ENCODE measurements at regions of chr1 and their contacts with region 1.

Region 1: DNA sequence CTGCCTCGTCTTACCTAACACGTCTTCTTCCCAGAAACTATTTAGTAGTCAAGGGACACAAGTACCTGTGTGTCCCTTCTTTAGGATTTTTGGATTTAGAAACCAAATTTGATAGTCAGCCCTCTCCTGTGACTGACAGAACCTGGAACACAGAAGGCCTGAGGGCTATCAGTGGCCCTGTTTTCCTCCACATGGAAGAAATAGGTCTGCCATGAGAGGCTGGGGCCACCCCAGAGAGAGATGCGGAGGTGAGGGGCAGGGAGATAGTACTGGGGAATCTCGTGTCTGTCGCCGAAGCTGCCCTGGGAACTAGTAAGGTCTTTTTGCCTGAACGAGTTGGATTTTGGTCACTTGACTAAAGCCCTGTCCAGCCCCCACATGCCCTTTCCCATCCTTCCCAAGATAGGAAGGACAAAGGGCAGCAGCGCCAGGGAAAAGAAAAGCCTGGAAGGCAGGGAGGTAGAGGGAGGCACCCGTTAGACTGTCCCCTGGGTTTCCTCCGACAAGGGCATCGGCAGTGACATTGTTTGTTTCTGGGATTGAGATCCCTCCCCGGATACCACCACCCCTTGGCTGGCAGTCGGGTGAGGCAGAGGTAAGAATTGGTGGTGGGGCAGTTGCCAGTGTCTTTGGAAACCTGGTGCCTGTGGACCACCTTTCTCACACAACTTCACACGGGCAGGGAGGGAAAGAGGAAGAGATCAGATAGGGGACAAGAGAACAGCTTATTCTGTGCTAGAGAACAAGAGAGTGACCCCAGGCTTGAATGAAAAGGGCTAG is 19.8 kb downstream of the SMIM12 start:
- DNase-seq: peak in 1 of 3 donors; percentile 38
- ATAC-seq: no peak
- H3K4me3 ChIP-seq: no peak overlapping the region
- H3K27ac ChIP-seq: no peak overlapping the region
- H3K4me1 ChIP-seq: peaks cover 0 to 4% (median 0%) of the 10 kb centered on the region in 4 donors
- H3K27me3 ChIP-seq: no peaks in the 10 kb centered on the region
- CTCF ChIP-seq: no peak
- POLR2A ChIP-seq: no peak

Region 2: DNA sequence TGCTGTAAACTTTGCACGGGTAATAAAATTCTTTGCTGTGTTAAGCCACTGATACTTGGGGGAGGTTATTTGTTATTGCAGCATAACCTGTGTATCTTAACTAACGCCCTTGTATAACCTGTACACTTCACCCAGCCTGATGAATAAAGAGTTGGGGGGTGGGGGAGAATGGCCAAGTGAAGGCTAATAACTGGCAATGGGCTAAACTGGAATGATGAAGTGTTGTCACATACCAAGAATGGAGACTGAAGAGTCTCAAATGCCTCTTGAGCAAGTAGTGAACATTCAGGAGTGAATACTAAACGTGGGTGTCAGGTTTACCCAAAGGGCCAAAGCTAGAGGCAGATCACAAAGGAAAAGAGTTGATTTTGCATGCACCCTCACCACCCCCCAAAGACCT is 493.6 kb before region 1 on chr1:
- intact Hi-C with region 1: no loop called
- DNase-seq: no peak
- ATAC-seq: no peak
- H3K4me3 ChIP-seq: no peak overlapping the region
- H3K27ac ChIP-seq: no peak overlapping the region
- H3K4me1 ChIP-seq: no peaks in the 10 kb centered on the region
- H3K27me3 ChIP-seq: no peaks in the 10 kb centered on the region
- CTCF ChIP-seq: no peak
- POLR2A ChIP-seq: no peak

Region 3: GRCh38 chr1:34792868-34793727 is 46.6 kb before region 1 on chr1 and contains the start of gene GJA4:
- intact Hi-C with region 1: loop called in 1 of 2 experiments (anchors 5 kb)
- DNase-seq: peak in 1 of 3 donors; percentile 50
- ATAC-seq: peak; percentile 18 to 43 (median 26)
- H3K4me3 ChIP-seq: peak within 1 kb of the TSS; percentile 33 to 42 (median 39)
- H3K27ac ChIP-seq: peak within 1 kb of the TSS; percentile 56 to 72 (median 64)
- H3K4me1 ChIP-seq: no peaks in the 10 kb centered on the region
- H3K27me3 ChIP-seq: no peaks in the 10 kb centered on the region
- CTCF ChIP-seq: no peak
- POLR2A ChIP-seq: no peak
- total RNA-seq, gene GJA4: 4.3 to 21.8 (median 7.6) TPM